ENCODE measurements at regions of chr9 and their contacts with region 1.

Region 1: GRCh38 chr9:68844631-68845612 is 139.9 kb downstream of the PIP5K1B start:
- DNase-seq: peak; percentile 59
- ATAC-seq: peak; percentile 60

Region 2: GRCh38 chr9:68793605-68794343 is 51.1 kb before region 1 on chr9:
- intact Hi-C with region 1: loop called (anchors 5 kb)
- DNase-seq: no peak
- ATAC-seq: no peak

Region 3: DNA sequence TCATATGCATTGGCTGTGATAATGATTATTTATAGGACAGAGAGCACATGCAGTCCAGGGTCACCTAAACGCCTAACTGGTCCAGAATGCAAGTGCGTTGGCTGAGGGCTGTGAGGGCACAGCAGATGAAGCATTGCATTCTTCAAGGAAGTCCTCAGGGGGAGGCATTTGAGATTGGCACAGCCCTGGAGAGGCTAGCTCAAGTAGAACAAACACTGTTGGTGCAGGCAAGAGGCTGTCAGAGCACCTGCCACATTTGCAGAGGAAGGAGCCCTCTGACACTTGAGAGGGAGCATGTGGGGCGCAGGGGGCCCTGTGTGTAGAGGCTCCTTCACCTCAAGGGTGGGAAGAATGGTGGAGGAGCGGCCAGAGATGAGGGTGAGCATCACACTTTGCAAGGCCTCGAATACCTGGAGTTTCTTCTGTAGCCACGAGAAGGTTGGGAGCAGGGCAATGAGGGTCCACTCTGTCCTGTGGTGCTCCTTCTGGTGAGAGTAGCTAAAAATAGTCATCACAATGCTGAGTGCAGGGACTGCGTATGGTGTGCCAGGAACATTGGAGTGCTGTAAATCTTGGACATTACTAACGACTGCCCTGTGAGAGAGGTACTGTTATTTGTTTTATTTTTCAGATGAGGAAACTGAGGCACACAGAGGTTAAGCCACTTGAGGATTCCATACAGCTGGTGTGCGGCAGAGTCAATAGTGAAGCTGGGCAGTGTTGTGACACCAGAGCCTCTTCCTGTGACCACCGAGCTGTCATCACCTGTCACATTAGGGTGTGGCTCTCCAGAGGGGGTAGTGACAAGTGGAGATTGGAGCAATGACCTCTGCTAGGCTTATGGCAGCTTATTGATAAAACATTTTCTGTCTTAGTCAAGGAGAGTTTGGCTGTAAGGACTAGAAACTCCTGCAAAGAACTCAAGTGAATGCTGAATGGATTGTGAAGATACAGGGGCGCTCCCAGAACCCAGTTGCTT is 39.7 kb before region 1 on chr9:
- intact Hi-C with region 1: no loop called
- DNase-seq: no peak
- ATAC-seq: peak; percentile 92

Measured in Right ventricle myocardium superior (tissue), 1 donor.